ENCODE measurements at regions of chr9 and their contacts with region 1.

Region 1: GRCh38 chr9:28792736-28793135 is 1219.5 kb upstream of the C9orf72 start:
- DNase-seq: no peak
- ATAC-seq: no peak
- H3K4me3 ChIP-seq: no peak overlapping the region
- H3K4me3 Mint-ChIP-seq: no peak overlapping the region
- H3K27ac ChIP-seq: no peak overlapping the region
- H3K27ac Mint-ChIP-seq: no peak overlapping the region
- H3K4me1 ChIP-seq: no peaks in the 10 kb centered on the region
- H3K4me1 Mint-ChIP-seq: no peaks in the 10 kb centered on the region
- H3K27me3 ChIP-seq: no peaks in the 10 kb centered on the region
- H3K27me3 Mint-ChIP-seq: no peaks in the 10 kb centered on the region
- CTCF ChIP-seq: no peak

Region 2: DNA sequence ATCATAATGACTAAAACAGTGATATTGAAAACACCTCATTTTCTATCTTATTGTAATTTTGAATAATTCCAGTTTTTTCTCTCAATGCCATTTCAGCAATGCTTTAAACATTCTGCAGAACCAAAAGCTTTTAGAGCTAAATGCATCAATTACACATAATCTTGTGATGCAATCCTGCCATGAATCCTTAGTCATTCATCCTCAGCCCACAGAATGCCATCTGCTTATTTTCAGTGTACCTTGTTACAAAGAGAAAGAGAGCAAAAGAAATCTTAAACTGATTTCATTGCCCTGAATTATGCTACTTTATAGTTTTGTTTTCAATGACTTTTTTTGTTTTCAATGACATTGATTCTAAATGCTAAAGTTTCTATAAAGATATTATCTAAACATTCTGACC is 15.3 kb after region 1 on chr9:
- CTCF ChIA-PET with region 1: no interaction called
- POLR2A ChIA-PET with region 1: no interaction called
- intact Hi-C with region 1: loop called in 1 of 2 experiments (anchors 1 kb)
- DNase-seq: no peak
- ATAC-seq: no peak
- H3K4me3 ChIP-seq: no peak overlapping the region
- H3K4me3 Mint-ChIP-seq: no peak overlapping the region
- H3K27ac ChIP-seq: no peak overlapping the region
- H3K27ac Mint-ChIP-seq: no peak overlapping the region
- H3K4me1 ChIP-seq: no peaks in the 10 kb centered on the region
- H3K4me1 Mint-ChIP-seq: no peaks in the 10 kb centered on the region
- H3K27me3 ChIP-seq: no peaks in the 10 kb centered on the region
- H3K27me3 Mint-ChIP-seq: no peaks in the 10 kb centered on the region
- CTCF ChIP-seq: no peak

Region 3: GRCh38 chr9:28839778-28840430 is 47.2 kb after region 1 on chr9:
- CTCF ChIA-PET with region 1: no interaction called
- POLR2A ChIA-PET with region 1: no interaction called
- intact Hi-C with region 1: no loop called
- DNase-seq: peak in 1 of 14 experiments; percentile 3
- ATAC-seq: no peak
- H3K4me3 ChIP-seq: no peak overlapping the region
- H3K4me3 Mint-ChIP-seq: no peak overlapping the region
- H3K27ac ChIP-seq: no peak overlapping the region
- H3K27ac Mint-ChIP-seq: no peak overlapping the region
- H3K4me1 ChIP-seq: no peaks in the 10 kb centered on the region
- H3K4me1 Mint-ChIP-seq: no peaks in the 10 kb centered on the region
- H3K27me3 ChIP-seq: no peaks in the 10 kb centered on the region
- H3K27me3 Mint-ChIP-seq: no peaks in the 10 kb centered on the region
- CTCF ChIP-seq: no peak